ENCODE measurements at regions of chr2 and their contacts with region 1.

Region 1: GRCh38 chr2:229586746-229587705 is 127.3 kb downstream of the DNER start:
- DNase-seq: peak; percentile 93
- H3K4me3 ChIP-seq: peak overlapping the region; percentile 21 to 41 (median 33)
- H3K27ac ChIP-seq: peak overlapping the region; percentile 94
- H3K4me1 ChIP-seq: peaks cover 16% of the 10 kb centered on the region
- H3K27me3 ChIP-seq: no peaks in the 10 kb centered on the region
- CTCF ChIP-seq: peak; percentile 85 to 89

Region 2: DNA sequence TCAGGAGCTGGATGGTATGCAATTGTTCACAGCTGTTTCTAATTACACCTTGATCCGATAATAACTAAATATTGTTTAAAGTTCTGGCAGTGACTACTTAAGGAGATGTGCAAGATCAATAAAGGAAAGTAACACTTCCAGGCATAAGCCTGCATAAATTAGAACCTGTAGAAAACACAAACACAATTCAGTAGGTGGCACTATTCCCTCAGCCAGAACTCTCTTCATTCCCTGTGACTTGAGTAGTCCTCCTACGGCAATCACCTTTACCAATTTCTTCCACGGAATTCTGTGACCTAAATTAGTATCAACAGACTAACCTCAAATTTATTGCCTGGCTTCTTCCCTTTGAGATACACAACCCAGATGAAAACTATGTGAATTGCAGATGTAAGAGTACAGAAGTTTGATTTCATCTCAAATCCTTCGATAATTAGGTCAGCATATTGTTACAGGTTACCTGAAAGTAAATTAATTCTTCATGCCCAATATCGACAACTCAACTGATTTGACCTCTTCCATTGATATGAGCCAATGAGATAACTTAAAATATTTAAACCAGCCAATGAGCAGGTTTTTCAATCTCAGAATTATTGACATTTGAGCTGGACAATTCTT is 453.8 kb before region 1 on chr2:
- CTCF ChIA-PET with region 1: no interaction called
- dilution Hi-C with region 1: no loop called
- in situ Hi-C with region 1: no loop called
- intact Hi-C with region 1: loop called (anchors 1 kb)
- DNase-seq: peak; percentile 40
- H3K4me3 ChIP-seq: no peak overlapping the region
- H3K27ac ChIP-seq: no peak overlapping the region
- H3K4me1 ChIP-seq: no peaks in the 10 kb centered on the region
- H3K27me3 ChIP-seq: no peaks in the 10 kb centered on the region
- CTCF ChIP-seq: peak; percentile 46 to 77

Region 3: DNA sequence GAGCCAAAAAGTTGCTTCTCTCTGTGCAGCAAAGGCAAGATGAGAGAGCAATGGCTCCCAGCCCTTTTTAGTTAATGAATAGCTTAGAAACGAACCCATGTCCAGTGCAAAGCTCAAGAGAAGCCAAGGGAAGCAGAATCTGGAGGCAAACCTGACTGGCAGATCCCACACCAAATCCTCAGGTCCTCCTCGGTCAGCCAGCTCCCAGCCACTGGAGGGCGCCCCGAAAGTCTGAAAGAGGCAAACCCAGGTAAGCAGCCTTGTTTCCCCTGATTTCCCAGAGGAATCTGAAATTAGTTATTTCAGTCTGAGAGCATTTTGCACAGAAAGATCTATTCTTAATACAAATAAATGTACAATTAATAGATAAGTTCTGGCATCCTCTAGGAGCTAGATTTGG is 244.7 kb before region 1 on chr2:
- CTCF ChIA-PET with region 1: interaction called, 7 read pairs
- dilution Hi-C with region 1: no loop called
- in situ Hi-C with region 1: loop called (anchors 10 to 25 kb)
- intact Hi-C with region 1: loop called (anchors 1 kb)
- DNase-seq: peak; percentile 55
- H3K4me3 ChIP-seq: no peak overlapping the region
- H3K27ac ChIP-seq: no peak overlapping the region
- H3K4me1 ChIP-seq: peaks cover 12% of the 10 kb centered on the region
- H3K27me3 ChIP-seq: no peaks in the 10 kb centered on the region
- CTCF ChIP-seq: peak; percentile 69 to 73

Region 4: GRCh38 chr2:229445019-229445418 is 142.0 kb before region 1 on chr2:
- CTCF ChIA-PET with region 1: interaction called, 4 read pairs
- dilution Hi-C with region 1: no loop called
- in situ Hi-C with region 1: loop called in 1 of 2 experiments (anchors 10 kb)
- intact Hi-C with region 1: no loop called
- DNase-seq: peak; percentile 97
- H3K4me3 ChIP-seq: no peak overlapping the region
- H3K27ac ChIP-seq: peak overlapping the region; percentile 86
- H3K4me1 ChIP-seq: peaks cover 17% of the 10 kb centered on the region
- H3K27me3 ChIP-seq: no peaks in the 10 kb centered on the region
- CTCF ChIP-seq: peak in 1 of 2 donors; percentile 40

Region 5: GRCh38 chr2:229454934-229455631 is 131.9 kb before region 1 on chr2:
- CTCF ChIA-PET with region 1: no interaction called
- dilution Hi-C with region 1: no loop called
- in situ Hi-C with region 1: no loop called
- intact Hi-C with region 1: no loop called
- DNase-seq: peak; percentile 81
- H3K4me3 ChIP-seq: no peak overlapping the region
- H3K27ac ChIP-seq: peak overlapping the region; percentile 74
- H3K4me1 ChIP-seq: peaks cover 17% of the 10 kb centered on the region
- H3K27me3 ChIP-seq: no peaks in the 10 kb centered on the region
- CTCF ChIP-seq: no peak